ENCODE measurements at regions of chr7 and their contacts with region 1.

Region 1: DNA sequence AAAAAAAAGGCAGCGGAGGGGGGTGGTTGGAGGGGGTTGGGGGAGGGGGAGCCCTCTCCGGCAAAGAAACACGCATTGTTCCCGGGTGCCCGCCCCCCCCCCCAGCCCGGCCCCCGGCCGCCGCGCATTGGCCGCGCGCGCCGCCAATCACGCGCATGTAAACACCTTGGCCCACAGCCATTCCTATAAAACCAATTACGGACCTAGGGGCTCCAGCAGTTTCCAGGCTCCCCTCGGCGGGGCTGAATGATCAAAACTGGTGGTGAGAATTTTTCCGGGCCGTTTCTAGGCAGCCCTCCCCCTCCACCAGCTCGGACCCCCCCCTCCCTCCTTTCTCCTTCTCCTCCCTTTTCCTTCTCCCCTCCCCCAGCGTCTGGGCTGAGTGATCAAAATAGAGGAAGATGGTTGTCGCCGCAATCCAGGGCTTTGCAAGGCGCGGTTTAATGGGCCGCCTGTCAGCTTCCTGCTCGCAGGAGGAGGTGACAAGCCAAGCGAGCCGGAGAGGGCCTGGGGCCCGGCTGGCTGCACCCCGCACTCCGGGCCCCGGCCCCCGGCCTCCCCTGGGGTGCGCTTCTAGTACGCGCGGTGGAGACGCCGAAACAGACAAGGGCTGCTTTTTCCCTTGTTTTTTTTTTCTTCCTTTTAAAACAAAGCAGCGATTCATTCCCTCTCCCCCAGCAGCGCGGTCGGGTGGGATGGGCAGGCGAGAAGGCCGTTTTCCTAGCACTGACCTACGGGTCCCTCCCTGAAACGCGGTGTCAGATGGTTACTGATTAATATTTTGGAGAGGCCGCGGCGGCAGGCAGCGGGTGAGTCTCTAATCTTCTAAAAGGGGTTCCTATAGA is 432 bp upstream of the TNRC18 start:
- DNase-seq: peak; percentile 95
- ATAC-seq: peak; percentile 38
- H3K4me3 ChIP-seq: peak overlapping the region; percentile 92 to 98 (median 94)
- H3K27ac ChIP-seq: peak overlapping the region; percentile 100
- H3K4me1 ChIP-seq: peaks cover 2% of the 10 kb centered on the region
- H3K27me3 ChIP-seq: no peaks in the 10 kb centered on the region; a peak in 1 of 5 replicates
- CTCF ChIP-seq: no peak
- EP300 ChIP-seq: peak; percentile 37 to 51; a peak in 1 of 4 replicates
- POLR2A ChIP-seq: peak in 1 of 2 experiments; percentile 81; a peak in 2 of 4 replicates
- RAD21 ChIP-seq: no peak

Region 2: DNA sequence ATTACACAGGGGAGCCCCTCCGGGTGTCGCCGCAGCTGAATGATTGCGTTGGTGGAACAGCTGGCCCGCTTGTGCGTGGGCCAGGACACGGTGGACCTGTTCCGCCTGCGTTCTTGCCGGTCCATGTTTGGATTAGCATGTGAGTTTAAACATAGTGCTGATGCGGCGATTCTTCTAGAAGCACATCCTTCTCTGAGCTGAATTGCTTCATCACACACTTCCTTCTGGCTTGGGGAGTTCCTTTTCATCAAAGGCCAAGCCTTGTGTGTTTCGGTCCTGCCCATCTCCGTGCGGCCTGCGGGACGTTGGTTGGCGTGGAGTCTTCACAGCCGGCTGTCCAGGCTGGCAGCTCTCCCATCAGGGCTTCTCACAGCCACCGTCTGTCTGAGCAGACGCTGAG is 186.8 kb before region 1 on chr7:
- CTCF ChIA-PET with region 1: no interaction called
- POLR2A ChIA-PET with region 1: interaction called, 12 read pairs
- in situ Hi-C with region 1: no loop called
- intact Hi-C with region 1: no loop called
- DNase-seq: no peak
- ATAC-seq: no peak
- H3K4me3 ChIP-seq: no peak overlapping the region
- H3K27ac ChIP-seq: no peak overlapping the region
- H3K4me1 ChIP-seq: peaks cover 22% of the 10 kb centered on the region
- H3K27me3 ChIP-seq: peaks cover 0 to 1% of the 10 kb centered on the region in 2 experiments; a peak in 3 of 5 replicates
- CTCF ChIP-seq: no peak
- EP300 ChIP-seq: no peak
- POLR2A ChIP-seq: no peak
- RAD21 ChIP-seq: no peak

Region 3: DNA sequence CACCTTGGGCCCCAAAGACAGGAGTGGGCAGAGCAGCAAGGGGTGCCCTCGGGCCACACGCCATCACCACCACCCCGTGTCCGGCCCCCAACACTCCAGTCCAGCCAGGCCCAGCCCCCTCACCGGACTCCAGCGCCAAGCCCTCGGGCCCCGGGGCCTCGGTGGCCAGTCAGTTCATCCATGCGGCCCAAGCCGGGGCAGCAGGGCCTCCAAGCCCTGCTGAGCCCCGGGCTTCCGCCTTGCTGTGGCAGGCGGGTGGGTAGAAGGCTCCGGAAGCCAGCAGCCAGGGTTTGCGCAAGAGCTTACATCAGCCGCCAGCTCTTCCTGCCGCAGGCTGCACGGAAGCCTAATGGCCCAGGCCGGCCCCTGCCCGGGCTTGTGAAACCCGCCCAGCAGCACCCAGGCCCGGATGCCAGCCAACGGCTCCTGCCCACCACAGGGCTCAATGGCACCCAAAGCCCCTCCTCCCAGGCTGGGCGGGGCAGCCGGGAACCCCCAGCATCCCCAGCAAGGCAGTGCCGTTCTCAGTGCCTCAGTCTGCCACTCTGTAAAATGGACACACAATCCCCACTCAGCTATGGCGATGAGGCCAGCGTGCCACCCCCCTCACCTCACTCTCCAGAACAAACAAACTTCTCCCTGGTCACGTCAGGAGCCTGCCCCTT is 26.9 kb before region 1 on chr7:
- CTCF ChIA-PET with region 1: no interaction called
- POLR2A ChIA-PET with region 1: interaction called, 11 read pairs
- in situ Hi-C with region 1: no loop called
- intact Hi-C with region 1: no loop called
- DNase-seq: peak; percentile 29
- ATAC-seq: peak; percentile 59
- H3K4me3 ChIP-seq: no peak overlapping the region
- H3K27ac ChIP-seq: no peak overlapping the region
- H3K4me1 ChIP-seq: no peaks in the 10 kb centered on the region
- H3K27me3 ChIP-seq: no peaks in the 10 kb centered on the region
- CTCF ChIP-seq: no peak
- EP300 ChIP-seq: no peak
- POLR2A ChIP-seq: no peak
- RAD21 ChIP-seq: no peak

Region 4: DNA sequence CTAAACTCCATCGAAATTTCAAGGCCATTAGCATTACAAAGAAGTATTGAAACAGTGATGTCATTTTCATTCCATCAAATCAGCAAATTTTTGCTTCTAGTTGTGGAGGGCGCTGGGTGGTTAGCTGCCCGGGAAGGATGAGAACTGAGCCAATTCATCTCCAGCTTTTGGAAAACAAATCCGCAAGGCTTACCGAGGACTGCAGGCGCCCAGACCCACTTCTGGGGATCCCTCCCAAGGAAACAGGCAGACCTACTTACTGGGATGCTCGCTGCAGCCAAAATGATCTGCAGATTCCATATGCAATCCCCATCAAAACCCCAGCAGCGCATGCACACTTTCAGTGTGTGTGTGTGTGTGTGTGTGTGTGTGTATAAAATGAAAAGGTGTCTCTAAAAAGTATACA is 19.6 kb before region 1 on chr7:
- CTCF ChIA-PET with region 1: no interaction called
- POLR2A ChIA-PET with region 1: interaction called, 11 read pairs
- in situ Hi-C with region 1: no loop called
- intact Hi-C with region 1: no loop called
- DNase-seq: no peak
- ATAC-seq: no peak
- H3K4me3 ChIP-seq: no peak overlapping the region
- H3K27ac ChIP-seq: no peak overlapping the region
- H3K4me1 ChIP-seq: peaks cover 31% of the 10 kb centered on the region
- H3K27me3 ChIP-seq: no peaks in the 10 kb centered on the region
- CTCF ChIP-seq: no peak
- EP300 ChIP-seq: no peak
- POLR2A ChIP-seq: no peak
- RAD21 ChIP-seq: no peak

Region 5: GRCh38 chr7:5574770-5575269 is 150.8 kb after region 1 on chr7:
- CTCF ChIA-PET with region 1: no interaction called
- POLR2A ChIA-PET with region 1: no interaction called
- in situ Hi-C with region 1: no loop called
- intact Hi-C with region 1: no loop called
- DNase-seq: no peak
- ATAC-seq: peak; percentile 11; the same call in 2 of the 3 replicates
- H3K4me3 ChIP-seq: peak overlapping the region; percentile 46 to 66 (median 52); a peak in 5 of 6 replicates
- H3K27ac ChIP-seq: no peak overlapping the region
- H3K4me1 ChIP-seq: peaks cover 51% of the 10 kb centered on the region
- H3K27me3 ChIP-seq: 0 out of 5 replicates have a peak, but pooled peaks cover 0 to 3% of the 10 kb centered on the region in 2 experiments
- CTCF ChIP-seq: no peak
- EP300 ChIP-seq: no peak
- POLR2A ChIP-seq: no peak
- RAD21 ChIP-seq: no peak

Region 6: GRCh38 chr7:5694912-5695726 is 271.1 kb after region 1 on chr7:
- CTCF ChIA-PET with region 1: no interaction called
- POLR2A ChIA-PET with region 1: no interaction called
- in situ Hi-C with region 1: no loop called
- intact Hi-C with region 1: no loop called
- DNase-seq: no peak
- ATAC-seq: no peak
- H3K4me3 ChIP-seq: no peak overlapping the region
- H3K27ac ChIP-seq: no peak overlapping the region
- H3K4me1 ChIP-seq: peaks cover 34% of the 10 kb centered on the region
- H3K27me3 ChIP-seq: no peaks in the 10 kb centered on the region
- CTCF ChIP-seq: no peak
- EP300 ChIP-seq: no peak
- POLR2A ChIP-seq: no peak
- RAD21 ChIP-seq: no peak